Activated CD4-positive, alpha-beta T cell treated with anti-CD3 and anti-CD28 coated beads, Interleukin-2, amount 10 ng/mL, durations not matched to agents 24 days and 14 days (primary cell): ENCODE measurements at regions of chr14 and their contacts with region 1.

Region 1: GRCh38 chr14:103628684-103629502 is at the start of gene KLC1:
- DNase-seq: peak; percentile 96
- H3K4me3 Mint-ChIP-seq: peak within 1 kb of the TSS; percentile 91
- H3K27ac Mint-ChIP-seq: peak within 1 kb of the TSS; percentile 95
- H3K4me1 Mint-ChIP-seq: peaks cover 27% of the 10 kb centered on the region
- H3K27me3 Mint-ChIP-seq: no peaks in the 10 kb centered on the region
- total RNA-seq, gene KLC1: 132 and 155 TPM in 2 replicates

Region 2: DNA sequence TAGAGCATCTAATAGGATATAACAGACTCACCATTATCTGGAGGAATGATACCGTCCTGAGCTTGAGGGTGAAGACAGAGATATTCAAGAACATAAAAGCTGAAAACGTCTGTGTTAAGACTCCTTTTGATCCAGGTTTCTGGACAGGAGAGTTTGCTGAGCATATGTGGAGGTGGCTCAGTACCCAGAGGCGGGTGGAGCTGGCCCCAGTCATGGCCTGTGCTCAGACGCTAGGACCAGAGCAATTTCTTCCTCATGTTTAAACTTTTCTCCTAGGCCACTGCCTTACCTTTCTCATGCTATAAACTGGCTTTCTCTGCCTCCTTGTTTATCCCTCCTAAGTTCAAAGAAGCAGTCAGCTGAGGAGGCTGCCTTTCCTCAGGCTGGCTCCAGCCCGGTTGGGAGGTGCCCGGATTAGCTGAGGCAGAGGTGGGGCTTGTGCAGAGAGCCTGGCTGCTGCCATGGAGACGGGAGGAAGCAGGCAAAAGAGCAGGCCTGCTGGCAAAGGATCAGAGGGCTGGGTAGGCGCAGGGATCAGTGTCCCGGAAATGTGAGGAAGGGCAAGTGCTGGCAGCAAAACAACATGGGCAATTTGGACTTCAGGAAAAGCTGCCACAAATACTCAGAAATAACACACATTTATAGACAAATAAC is 52.4 kb before region 1 on chr14:
- intact Hi-C with region 1: loop called (anchors 5 kb)
- DNase-seq: no peak
- H3K4me3 Mint-ChIP-seq: no peak overlapping the region
- H3K27ac Mint-ChIP-seq: no peak overlapping the region
- H3K4me1 Mint-ChIP-seq: peaks cover 2% of the 10 kb centered on the region
- H3K27me3 Mint-ChIP-seq: no peaks in the 10 kb centered on the region

Region 3: DNA sequence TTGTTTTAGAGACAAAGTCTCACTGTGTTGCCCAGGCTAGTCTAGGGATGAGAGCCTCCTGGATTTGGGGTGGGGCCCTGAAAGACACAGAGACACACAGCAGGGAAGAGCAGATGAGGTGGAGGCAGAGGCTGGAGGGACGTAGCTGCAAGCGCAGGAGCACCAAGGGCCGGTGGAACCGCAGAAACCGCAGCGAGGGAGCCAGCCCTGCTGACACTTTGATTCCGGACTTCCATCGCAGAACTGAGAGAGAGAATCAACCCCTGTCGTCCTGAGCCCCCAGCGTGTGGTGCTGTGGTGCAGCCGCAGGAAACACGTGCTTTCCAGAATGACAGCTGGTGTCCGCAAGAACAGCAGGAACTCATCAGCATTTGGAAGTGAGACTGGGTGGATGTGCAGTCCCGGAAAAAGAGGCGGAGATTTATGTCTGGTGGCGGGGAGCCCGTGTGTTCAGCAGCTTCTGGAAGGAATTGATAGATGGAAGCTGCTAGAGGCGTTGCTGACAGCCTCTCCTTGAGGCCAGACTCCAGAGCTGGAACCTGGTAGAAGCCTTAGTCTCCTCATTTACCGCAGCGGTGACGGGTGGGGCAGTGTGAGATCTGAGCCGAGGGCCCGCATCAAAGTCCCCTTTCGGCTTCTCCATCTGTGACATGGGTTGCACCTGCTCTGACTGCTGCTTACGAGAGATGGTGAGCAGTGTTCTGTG is 21.8 kb before region 1 on chr14:
- intact Hi-C with region 1: loop called (anchors 2 kb)
- DNase-seq: peak; percentile 88
- H3K4me3 Mint-ChIP-seq: peak overlapping the region; percentile 73
- H3K27ac Mint-ChIP-seq: peak overlapping the region; percentile 82
- H3K4me1 Mint-ChIP-seq: peaks cover 20% of the 10 kb centered on the region
- H3K27me3 Mint-ChIP-seq: peaks cover 19% of the 10 kb centered on the region

Region 4: DNA sequence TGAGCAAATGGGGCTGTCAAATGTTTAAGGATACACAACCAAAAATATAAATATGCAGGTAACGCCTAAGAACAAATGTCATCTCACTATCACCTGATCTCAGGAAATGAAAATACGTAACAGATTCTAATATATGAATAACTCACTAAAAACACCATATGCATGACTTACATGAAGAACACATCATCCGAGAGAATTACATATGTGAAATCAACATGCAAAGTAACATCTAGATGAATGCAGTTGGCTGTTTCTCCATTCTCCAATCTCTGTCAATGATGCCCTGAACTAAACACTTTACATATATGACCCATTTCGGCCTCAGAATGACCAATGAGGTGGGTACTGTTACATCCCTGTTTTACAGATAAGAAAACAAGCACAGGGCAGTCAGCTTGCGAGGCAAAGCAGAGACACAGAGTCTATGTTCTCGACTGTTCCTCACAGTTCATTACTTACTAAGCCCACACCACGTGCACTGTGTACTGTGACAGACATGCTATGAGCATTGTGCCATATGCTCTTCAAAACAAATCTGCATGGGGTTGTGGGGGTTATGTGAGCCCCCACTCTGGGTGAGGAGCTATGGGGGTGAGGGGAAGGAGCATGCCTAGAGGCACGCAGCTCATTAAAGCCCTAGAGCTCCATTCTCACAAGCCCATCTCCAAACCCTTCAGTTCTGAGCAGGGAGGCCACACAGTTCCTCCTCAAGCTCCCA is 129.3 kb after region 1 on chr14:
- intact Hi-C with region 1: no loop called
- DNase-seq: no peak
- H3K4me3 Mint-ChIP-seq: no peak overlapping the region
- H3K27ac Mint-ChIP-seq: no peak overlapping the region
- H3K4me1 Mint-ChIP-seq: no peaks in the 10 kb centered on the region
- H3K27me3 Mint-ChIP-seq: no peaks in the 10 kb centered on the region

Region 5: DNA sequence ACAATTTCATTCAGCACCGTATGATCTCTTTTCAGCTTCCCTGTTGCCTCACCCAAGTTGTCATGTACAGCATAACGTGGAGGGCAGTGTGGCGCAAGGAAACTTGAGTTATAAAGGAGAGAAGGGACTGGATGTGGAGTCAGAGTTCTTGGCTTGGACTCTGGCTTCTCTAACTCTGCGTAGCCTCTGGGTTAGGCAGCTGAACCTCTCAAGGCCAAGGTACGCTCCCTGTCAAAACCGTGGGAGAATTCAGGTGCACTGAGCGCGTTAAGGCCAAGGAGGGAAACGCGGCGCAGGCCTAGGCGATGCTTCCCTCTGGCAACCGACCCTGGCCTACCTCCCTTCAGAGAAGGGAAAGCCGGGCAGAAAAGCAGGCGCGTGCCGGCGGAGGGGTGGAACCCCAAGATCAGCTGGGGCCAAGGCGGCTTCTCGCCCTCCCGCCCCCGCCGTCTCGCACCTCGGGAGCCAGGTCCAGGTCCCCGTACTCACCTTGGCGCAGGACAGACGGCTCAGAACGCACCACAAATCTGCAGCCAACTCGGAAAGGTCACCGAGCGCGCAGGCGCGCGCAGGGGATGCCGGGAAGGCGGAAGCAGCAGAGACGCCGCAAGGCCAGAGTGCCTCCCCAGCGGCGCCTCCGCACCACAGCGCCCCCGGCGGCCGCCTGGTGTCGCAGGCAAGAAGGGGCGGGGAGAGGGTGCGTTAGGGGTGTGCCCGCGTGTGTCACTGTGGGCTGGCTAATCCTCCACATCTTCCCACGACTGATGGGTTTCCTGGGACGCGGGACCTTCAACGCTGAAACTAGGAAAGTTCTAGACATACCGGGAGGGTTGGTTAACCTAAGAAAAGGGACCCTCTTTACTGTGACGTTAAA is 292.3 kb after region 1 on chr14:
- intact Hi-C with region 1: loop called (anchors 2 kb)
- DNase-seq: peak; percentile 99
- H3K4me3 Mint-ChIP-seq: peak overlapping the region; percentile 93
- H3K27ac Mint-ChIP-seq: peak overlapping the region; percentile 87
- H3K4me1 Mint-ChIP-seq: peaks cover 9% of the 10 kb centered on the region
- H3K27me3 Mint-ChIP-seq: peaks cover 9% of the 10 kb centered on the region